ENCODE measurements at regions of chr15 and their contacts with region 1.

Region 1: DNA sequence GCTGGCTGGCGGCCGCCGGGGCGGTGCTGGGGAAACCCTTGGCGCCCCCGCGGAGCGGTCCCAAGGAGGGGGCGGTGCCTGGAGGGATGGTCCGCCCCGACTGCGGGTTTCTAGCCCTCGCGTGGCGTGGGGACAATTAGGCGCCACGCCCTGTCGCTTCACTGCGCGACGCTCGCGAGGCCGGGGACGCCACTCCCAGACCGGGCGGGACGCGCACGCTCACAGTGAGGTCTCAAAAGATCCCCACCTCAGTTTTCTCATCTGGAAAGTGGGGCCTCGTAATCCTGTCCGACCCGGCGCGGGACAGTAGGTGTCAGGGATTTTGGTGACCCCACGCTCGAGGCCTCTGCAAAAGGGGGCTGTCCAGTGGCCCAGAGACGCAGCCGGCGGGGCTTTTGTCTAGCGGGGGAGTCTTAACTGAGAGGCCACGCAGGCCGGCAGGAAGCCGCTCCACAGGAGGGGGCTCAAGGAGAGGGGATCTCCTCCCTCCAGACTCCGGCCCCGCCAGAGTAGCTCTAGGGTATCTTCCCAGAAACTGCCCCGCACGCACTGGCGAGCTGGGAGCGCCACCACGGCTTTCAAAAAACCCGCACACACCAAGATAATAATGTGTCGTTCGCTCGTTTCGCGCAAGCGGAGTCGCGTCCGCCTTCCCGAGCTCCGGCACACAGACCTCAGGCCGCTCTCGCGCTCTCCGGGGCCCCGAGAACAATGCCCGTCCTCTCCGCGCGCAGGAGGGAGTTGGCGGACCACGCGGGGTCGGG is 710 bp upstream of the CLK3 start:
- DNase-seq: peak; percentile 93
- ATAC-seq: peak; percentile 82

Region 2: GRCh38 chr15:74540761-74541493 is 74.0 kb before region 1 on chr15 and contains the start of gene ARID3B:
- intact Hi-C with region 1: loop called (anchors 5 kb)
- DNase-seq: peak; percentile 98
- ATAC-seq: peak; percentile 99
- total RNA-seq, gene ARID3B: 1.6 TPM